Heart left ventricle (tissue), 16 donors: ENCODE measurements at regions of chr1 and their contacts with region 1.

Region 1: DNA sequence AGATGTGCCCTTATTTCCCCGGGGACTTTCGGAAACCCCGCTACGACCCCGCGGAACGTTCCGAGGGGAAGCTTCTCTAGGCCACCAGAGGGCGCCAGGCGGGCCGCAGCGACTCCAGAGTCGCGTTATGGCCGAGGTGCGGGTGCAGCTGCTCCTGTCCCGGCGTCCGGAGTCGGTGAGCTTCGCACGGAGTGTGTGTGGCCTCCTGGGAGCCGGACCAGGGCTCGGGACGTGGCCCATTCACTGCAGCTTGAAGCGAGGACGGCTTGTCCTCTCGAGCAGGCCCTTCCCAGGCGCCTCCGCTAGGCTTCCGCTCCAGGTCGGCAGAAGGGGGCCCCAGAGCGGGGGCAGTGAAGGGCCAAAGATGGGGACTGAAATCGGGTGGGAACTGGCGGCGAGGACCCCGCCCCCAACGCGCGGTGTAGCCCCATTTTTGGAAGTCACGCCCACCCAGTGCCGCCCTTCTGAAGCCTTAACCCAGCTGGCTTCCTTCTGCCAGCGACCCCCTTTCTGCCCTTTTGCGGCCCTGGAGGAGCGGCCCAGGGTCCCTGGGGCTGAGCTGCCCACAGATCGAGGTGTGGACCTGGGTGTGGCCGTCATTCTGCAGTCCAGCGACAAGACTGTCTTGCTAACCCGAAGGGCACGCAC is at the start of gene NUDT17:
- DNase-seq: peak; percentile 79 to 91 (median 85)
- ATAC-seq: peak; percentile 69 to 88 (median 84)
- H3K4me3 ChIP-seq: peak within 1 kb of the TSS; percentile 9 to 75 (median 66)
- H3K27ac ChIP-seq: peak within 1 kb of the TSS; percentile 3 to 85 (median 74)
- H3K4me1 ChIP-seq: peaks cover 0 to 23% (median 13%) of the 10 kb centered on the region in 12 donors
- H3K27me3 ChIP-seq: no peaks in the 10 kb centered on the region
- CTCF ChIP-seq: peak; percentile 87 to 98 (median 96)
- POLR2A ChIP-seq: no peak
- total RNA-seq, gene NUDT17: 1.7 to 10.9 (median 4.3) TPM

Region 2: GRCh38 chr1:145782166-145783099 is 63.2 kb before region 1 on chr1:
- intact Hi-C with region 1: loop called in 1 of 10 experiments (anchors 2 kb)
- DNase-seq: no peak
- ATAC-seq: peak in 3 of 4 donors; percentile 29 to 38 (median 31)
- H3K4me3 ChIP-seq: peak overlapping the region; percentile 11 to 58 (median 43)
- H3K27ac ChIP-seq: peak overlapping the region; percentile 46 to 81 (median 75)
- H3K4me1 ChIP-seq: peaks cover 0 to 44% (median 33%) of the 10 kb centered on the region in 12 donors
- H3K27me3 ChIP-seq: no peaks in the 10 kb centered on the region
- CTCF ChIP-seq: no peak
- POLR2A ChIP-seq: no peak

Region 3: DNA sequence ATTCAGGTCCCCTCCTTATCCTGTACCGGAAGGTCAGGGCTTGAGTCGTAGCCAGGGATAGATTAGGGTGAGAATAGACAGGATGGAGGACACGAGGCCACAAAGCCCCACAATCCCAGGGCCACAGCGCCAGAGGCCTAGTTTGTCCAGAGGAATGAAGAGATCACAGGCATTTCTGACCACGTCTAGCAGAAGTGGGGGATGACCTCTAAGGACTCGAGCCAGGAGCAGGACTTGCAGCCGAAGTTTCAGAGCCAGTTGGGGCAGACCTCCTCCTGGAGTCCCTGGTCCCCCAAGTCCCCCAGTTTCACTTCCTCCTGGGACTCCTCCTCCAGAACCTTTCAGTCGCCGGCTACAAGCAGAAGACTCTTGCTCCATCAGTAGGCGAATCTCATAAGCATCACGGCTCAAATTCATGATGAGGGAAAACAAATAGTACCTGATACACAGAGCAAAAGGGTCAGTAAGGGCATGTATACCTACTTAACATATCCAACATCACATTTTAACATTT is 66.5 kb after region 1 on chr1:
- intact Hi-C with region 1: loop called in 6 of 10 experiments (anchors 5 kb)
- DNase-seq: no peak
- ATAC-seq: no peak
- H3K4me3 ChIP-seq: no peak overlapping the region
- H3K27ac ChIP-seq: no peak overlapping the region
- H3K4me1 ChIP-seq: peaks cover 0 to 34% (median 23%) of the 10 kb centered on the region in 12 donors
- H3K27me3 ChIP-seq: no peaks in the 10 kb centered on the region
- CTCF ChIP-seq: no peak
- POLR2A ChIP-seq: no peak

Region 4: GRCh38 chr1:145918144-145918992 is 72.7 kb after region 1 on chr1 and contains the start of gene PEX11B:
- intact Hi-C with region 1: loop called in 6 of 10 experiments (anchors 5 kb)
- DNase-seq: peak; percentile 89 to 93 (median 92)
- ATAC-seq: peak; percentile 91 to 96 (median 95)
- H3K4me3 ChIP-seq: peak within 1 kb of the TSS; percentile 72 to 99 (median 89)
- H3K27ac ChIP-seq: peak within 1 kb of the TSS; percentile 64 to 97 (median 92)
- H3K4me1 ChIP-seq: peaks cover 5 to 29% (median 22%) of the 10 kb centered on the region in 12 donors
- H3K27me3 ChIP-seq: no peaks in the 10 kb centered on the region
- CTCF ChIP-seq: no peak
- POLR2A ChIP-seq: peak in 1 of 2 donors; percentile 34
- total RNA-seq, gene PEX11B: 17.7 to 27.5 (median 24.5) TPM

Region 5: GRCh38 chr1:146019231-146020057 is 173.8 kb after region 1 on chr1:
- intact Hi-C with region 1: loop called in 5 of 10 experiments (anchors 1 to 5 kb)
- DNase-seq: no peak
- ATAC-seq: peak in 3 of 4 donors; percentile 4 to 16 (median 8)
- H3K4me3 ChIP-seq: peak overlapping the region in 10 of 12 donors; percentile 16 to 55 (median 40)
- H3K27ac ChIP-seq: peak overlapping the region in 5 of 12 donors; percentile 66 to 92 (median 76)
- H3K4me1 ChIP-seq: peaks cover 0 to 22% (median 5%) of the 10 kb centered on the region in 12 donors
- H3K27me3 ChIP-seq: peaks cover 0 to 25% (median 0%) of the 10 kb centered on the region in 9 donors
- CTCF ChIP-seq: no peak
- POLR2A ChIP-seq: no peak